Activated T-helper 1 cell treated with anti-CD3 and anti-CD28 coated beads, Interleukin-12 subunit alpha, Interleukin-12 subunit beta, Interleukin-2, Interleukin-4 antibody, amounts not matched to agents 30 ng/mL and 10 ng/mL and 1 ng/mL, durations not matched to agents 14 hours and 24 hours and 36 hours (primary cell): ENCODE measurements at regions of chr1 and their contacts with region 1.

Region 1: DNA sequence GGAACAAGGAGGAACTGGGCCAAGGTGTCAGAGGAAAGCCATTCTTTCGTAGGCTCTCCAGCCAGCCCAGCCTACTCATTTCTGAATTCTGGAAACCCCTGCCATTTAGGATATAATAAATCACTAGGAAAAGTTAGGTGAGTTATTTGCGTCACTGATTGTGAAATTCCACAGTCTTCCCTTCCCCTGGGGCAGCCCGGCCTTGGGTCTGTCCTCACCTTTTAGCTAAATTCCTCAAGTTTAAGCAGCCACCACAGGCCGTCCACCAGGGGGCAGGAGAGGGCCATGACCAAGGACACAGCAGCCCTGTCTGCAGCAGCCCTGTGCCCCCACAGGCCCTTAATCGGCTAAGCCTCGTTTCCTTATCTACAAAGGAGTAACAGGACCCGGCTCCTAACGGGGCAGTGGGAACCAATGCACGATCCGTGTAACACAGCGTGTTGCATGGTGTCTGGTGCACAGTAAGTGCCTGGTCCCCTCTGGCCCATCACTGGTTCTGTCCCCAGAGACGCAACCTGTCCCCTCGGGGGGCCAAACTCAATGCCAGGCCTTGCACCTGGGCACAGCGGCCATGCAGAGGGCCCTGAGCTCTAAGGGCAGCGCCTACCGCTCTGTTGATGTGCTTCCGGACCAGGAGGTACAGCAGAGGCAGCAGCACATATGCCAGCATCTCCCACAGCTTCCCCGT is 18.1 kb downstream of the GPR157 start:
- DNase-seq: peak; percentile 67
- H3K4me3 Mint-ChIP-seq: no peak overlapping the region
- H3K27ac Mint-ChIP-seq: no peak overlapping the region
- H3K4me1 Mint-ChIP-seq: peaks cover 20% of the 10 kb centered on the region
- H3K27me3 Mint-ChIP-seq: peaks cover 1% of the 10 kb centered on the region

Region 2: GRCh38 chr1:7845761-7846160 is 1265.1 kb before region 1 on chr1:
- intact Hi-C with region 1: no loop called
- DNase-seq: no peak
- H3K4me3 Mint-ChIP-seq: no peak overlapping the region
- H3K27ac Mint-ChIP-seq: no peak overlapping the region
- H3K4me1 Mint-ChIP-seq: no peaks in the 10 kb centered on the region
- H3K27me3 Mint-ChIP-seq: no peaks in the 10 kb centered on the region

Region 3: DNA sequence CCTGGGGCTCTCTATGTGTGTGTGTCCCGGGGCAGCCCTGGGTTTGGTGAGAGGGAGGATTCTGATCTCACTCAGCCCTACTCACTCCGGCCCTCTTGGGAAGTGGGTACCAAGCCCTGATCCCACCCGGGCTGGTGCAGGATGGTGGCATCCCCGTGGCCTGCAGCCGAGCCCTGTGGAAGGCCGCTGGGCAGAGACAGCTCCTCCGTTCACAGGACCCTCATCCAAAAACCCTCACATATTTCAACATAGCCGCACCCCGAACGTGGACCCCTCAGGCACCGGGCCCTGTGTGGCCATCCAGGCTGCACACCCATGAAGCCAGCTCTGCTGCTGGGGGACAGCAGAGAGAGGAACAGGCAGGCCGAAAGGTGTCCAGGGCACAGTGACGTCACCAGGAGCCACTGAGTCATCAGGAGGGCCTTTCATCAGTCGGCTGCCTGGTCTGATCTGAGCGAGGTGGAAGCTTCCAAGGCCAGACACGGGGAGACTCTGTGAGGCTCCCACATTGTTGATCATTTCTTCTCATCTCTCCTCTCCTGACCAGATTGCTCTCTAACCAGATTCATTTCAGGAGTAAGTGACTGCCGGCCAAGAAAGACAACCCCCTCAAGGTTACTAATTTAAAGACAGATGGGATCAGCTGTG is 34.3 kb after region 1 on chr1:
- intact Hi-C with region 1: loop called (anchors 1 kb)
- DNase-seq: no peak
- H3K4me3 Mint-ChIP-seq: no peak overlapping the region
- H3K27ac Mint-ChIP-seq: no peak overlapping the region
- H3K4me1 Mint-ChIP-seq: peaks cover 5% of the 10 kb centered on the region
- H3K27me3 Mint-ChIP-seq: peaks cover 3% of the 10 kb centered on the region

Region 4: DNA sequence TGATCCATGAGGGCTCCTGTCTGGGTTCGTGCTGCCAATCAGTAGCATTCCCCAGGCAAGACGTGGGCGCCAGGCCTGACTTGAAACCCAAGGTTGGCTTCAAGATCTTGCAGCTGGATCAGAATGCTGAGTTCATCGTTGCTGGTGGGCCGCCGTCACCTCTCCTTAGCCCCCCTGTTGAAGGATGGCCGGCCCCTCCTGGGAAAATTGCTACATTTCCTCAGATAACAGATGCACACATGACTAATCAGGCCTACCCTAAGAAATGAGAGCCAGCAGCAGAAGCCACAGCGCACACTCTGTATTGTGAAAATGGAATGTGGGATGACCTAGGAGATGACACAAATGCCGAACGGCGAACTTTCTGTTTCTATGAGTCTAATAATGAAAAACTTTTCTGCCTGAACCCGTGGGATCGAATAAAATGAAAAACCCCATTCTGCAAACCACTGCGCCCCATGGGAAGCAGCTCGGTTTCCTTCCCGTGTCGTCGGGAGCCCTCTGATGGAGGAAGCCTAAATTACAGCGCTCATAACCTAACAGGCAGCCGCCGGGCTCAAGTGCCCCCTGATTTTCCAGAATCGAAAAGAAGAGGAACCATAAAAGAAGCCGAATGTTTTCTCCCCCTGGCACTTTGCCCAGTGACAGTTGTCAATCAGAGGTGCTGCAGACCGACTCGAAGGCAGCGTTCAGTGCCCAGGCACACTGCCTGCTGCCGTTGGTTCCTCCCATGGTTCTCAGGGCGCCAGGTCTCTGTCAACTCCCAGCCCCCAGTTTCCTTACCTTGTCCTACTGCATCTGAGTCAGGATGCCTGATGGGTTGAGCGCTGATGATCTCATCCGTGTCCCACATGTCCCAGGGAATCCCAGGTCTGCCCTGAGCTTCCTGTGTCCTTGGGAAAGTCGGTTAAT is 85.6 kb after region 1 on chr1:
- intact Hi-C with region 1: loop called (anchors 1 kb)
- DNase-seq: peak; percentile 47
- H3K4me3 Mint-ChIP-seq: no peak overlapping the region
- H3K27ac Mint-ChIP-seq: no peak overlapping the region
- H3K4me1 Mint-ChIP-seq: peaks cover 24% of the 10 kb centered on the region
- H3K27me3 Mint-ChIP-seq: peaks cover 54% of the 10 kb centered on the region

Region 5: DNA sequence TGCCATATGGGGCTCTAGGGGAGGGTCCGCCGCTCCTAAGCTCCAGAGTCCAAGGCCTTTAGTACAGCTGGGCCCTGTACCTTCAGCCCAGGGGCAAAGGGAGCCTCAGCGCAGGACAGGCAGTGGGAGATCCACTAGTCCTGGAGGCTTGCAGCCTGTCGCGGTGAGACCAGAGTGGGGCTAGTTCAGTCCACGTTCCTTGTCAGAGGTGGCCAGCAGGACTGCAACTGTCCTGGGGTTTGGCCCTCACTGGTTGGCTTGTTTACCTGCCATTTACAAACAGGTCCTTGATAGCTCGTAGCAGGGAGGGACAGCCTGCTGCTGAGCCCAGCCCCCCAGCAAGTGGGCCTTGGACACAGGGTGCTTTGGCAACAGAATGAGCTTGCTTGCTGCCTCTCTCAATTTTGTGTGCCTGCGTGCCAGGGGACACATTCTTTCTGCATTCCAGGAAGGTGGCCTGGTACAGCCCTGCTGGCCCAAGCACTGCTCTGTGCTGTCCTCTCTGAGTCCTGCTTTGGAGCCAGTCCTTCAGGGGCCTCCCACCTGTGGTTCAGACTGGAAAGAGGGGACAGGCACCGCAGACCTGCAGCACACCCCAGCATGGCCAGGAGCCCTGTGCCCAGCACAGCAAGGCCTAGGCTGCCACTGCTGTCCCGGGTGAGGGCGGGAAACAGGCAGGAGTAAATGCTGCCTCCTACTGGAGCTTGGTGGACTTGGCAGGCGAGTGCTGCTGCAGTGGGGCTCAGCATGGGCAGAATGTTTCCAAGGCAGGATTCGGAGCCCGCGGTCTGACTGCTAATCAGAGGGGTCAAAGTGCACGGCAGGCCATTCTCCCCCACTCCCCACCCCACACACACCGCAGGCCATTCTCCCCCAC is 139.0 kb after region 1 on chr1:
- intact Hi-C with region 1: loop called (anchors 2 kb)
- DNase-seq: peak; percentile 17
- H3K4me3 Mint-ChIP-seq: no peak overlapping the region
- H3K27ac Mint-ChIP-seq: no peak overlapping the region
- H3K4me1 Mint-ChIP-seq: peaks cover 21% of the 10 kb centered on the region
- H3K27me3 Mint-ChIP-seq: no peaks in the 10 kb centered on the region